Caco-2 (cell line): ENCODE measurements at regions of chr10 and their contacts with region 1.

Region 1: GRCh38 chr10:21516242-21517131 is 9.0 kb downstream of the SKIDA1 start:
- DNase-seq: peak; percentile 76 to 85
- H3K4me3 ChIP-seq: peak overlapping the region; percentile 71
- H3K4me3 Mint-ChIP-seq: peak overlapping the region; percentile 92
- H3K27ac Mint-ChIP-seq: peak overlapping the region; percentile 80
- H3K4me1 ChIP-seq: peaks cover 47% of the 10 kb centered on the region
- H3K4me1 Mint-ChIP-seq: peaks cover 59% of the 10 kb centered on the region
- H3K27me3 ChIP-seq: no peaks in the 10 kb centered on the region
- H3K27me3 Mint-ChIP-seq: no peaks in the 10 kb centered on the region
- CTCF ChIP-seq: no peak

Region 2: DNA sequence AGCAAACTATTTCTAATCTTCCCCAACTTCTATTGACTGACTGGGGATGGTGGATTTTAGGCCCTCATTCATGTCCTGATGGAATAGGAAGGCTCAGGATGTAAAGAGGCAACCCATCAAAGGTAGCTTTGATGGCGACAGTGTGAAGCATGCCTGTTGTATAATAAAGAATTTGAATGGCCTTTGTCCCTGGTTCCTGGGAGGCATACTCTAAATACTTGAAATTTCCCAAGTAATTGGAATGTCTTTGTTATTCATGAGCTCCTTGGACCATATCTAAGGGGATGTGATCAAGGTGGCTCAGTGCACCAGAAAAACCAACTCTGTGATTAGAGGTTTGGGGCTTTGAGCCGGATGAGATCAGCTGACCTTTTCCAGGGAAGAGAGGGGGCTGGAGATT is 354.8 kb before region 1 on chr10:
- CTCF ChIA-PET with region 1: no interaction called
- POLR2A ChIA-PET with region 1: interaction called, 10 read pairs
- intact Hi-C with region 1: no loop called
- DNase-seq: peak; percentile 61 to 66
- H3K4me3 ChIP-seq: no peak overlapping the region
- H3K4me3 Mint-ChIP-seq: no peak overlapping the region
- H3K27ac Mint-ChIP-seq: peak overlapping the region; percentile 66
- H3K4me1 ChIP-seq: peaks cover 59% of the 10 kb centered on the region
- H3K4me1 Mint-ChIP-seq: peaks cover 57% of the 10 kb centered on the region
- H3K27me3 ChIP-seq: no peaks in the 10 kb centered on the region
- H3K27me3 Mint-ChIP-seq: no peaks in the 10 kb centered on the region
- CTCF ChIP-seq: no peak

Region 3: GRCh38 chr10:21533467-21534279 is 17.2 kb after region 1 on chr10 and contains the start of gene MLLT10:
- CTCF ChIA-PET with region 1: no interaction called
- POLR2A ChIA-PET with region 1: interaction called, 10 read pairs
- intact Hi-C with region 1: no loop called
- DNase-seq: peak; percentile 97 to 100
- H3K4me3 ChIP-seq: peak within 1 kb of the TSS; percentile 80
- H3K4me3 Mint-ChIP-seq: peak within 1 kb of the TSS; percentile 85
- H3K27ac Mint-ChIP-seq: peak within 1 kb of the TSS; percentile 94
- H3K4me1 ChIP-seq: peaks cover 25% of the 10 kb centered on the region
- H3K4me1 Mint-ChIP-seq: peaks cover 17% of the 10 kb centered on the region
- H3K27me3 ChIP-seq: no peaks in the 10 kb centered on the region
- H3K27me3 Mint-ChIP-seq: no peaks in the 10 kb centered on the region
- CTCF ChIP-seq: peak; percentile 30 to 44
- total RNA-seq, gene MLLT10: 84.3 and 85.3 TPM in 2 replicates

Region 4: DNA sequence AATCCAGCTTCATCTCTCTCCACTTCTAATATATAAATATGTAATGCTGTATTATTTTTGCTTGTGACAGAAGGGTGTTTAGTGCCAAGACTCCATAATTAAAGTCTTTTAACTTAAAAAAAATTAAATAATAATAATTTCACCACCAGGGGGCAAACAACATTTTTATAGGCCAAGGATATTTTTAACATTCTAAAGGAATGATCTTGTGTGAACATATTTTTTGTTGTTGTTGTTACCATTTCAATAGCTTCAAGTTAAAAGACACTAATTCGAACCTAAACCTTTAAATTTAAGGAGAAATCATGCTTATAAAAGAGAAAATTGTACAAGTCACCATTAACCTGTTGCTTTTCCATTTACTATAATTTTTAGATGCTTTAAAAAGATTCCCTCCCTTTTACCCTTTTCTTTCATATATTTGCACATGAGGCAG is 494.5 kb after region 1 on chr10:
- CTCF ChIA-PET with region 1: no interaction called
- POLR2A ChIA-PET with region 1: no interaction called
- intact Hi-C with region 1: no loop called
- DNase-seq: no peak
- H3K4me3 ChIP-seq: no peak overlapping the region
- H3K4me3 Mint-ChIP-seq: no peak overlapping the region
- H3K27ac Mint-ChIP-seq: no peak overlapping the region
- H3K4me1 ChIP-seq: no peaks in the 10 kb centered on the region
- H3K4me1 Mint-ChIP-seq: no peaks in the 10 kb centered on the region
- H3K27me3 ChIP-seq: no peaks in the 10 kb centered on the region
- H3K27me3 Mint-ChIP-seq: peaks cover 16% of the 10 kb centered on the region
- CTCF ChIP-seq: peak; percentile 37 to 76

Region 5: GRCh38 chr10:23121135-23121534 is 1604.6 kb after region 1 on chr10:
- CTCF ChIA-PET with region 1: no interaction called
- POLR2A ChIA-PET with region 1: interaction called, 12 read pairs
- intact Hi-C with region 1: no loop called
- DNase-seq: no peak
- H3K4me3 ChIP-seq: no peak overlapping the region
- H3K4me3 Mint-ChIP-seq: no peak overlapping the region
- H3K27ac Mint-ChIP-seq: no peak overlapping the region
- H3K4me1 ChIP-seq: no peaks in the 10 kb centered on the region
- H3K4me1 Mint-ChIP-seq: no peaks in the 10 kb centered on the region
- H3K27me3 ChIP-seq: no peaks in the 10 kb centered on the region
- H3K27me3 Mint-ChIP-seq: no peaks in the 10 kb centered on the region
- CTCF ChIP-seq: no peak